T-cell (primary cell): ENCODE measurements at regions of chr17 and their contacts with region 1.

Region 1: GRCh38 chr17:57276621-57277020 is 20.3 kb downstream of the MSI2 start:
- DNase-seq: no peak
- ATAC-seq: no peak
- H3K4me3 ChIP-seq: no peak overlapping the region
- H3K4me3 Mint-ChIP-seq: no peak overlapping the region
- H3K27ac ChIP-seq: no peak overlapping the region
- H3K27ac Mint-ChIP-seq: no peak overlapping the region
- H3K4me1 ChIP-seq: peaks cover 5 to 16% of the 10 kb centered on the region in 2 experiments
- H3K4me1 Mint-ChIP-seq: peaks cover 60 to 71% (median 62%) of the 10 kb centered on the region in 3 donors
- H3K27me3 ChIP-seq: no peaks in the 10 kb centered on the region
- H3K27me3 Mint-ChIP-seq: no peaks in the 10 kb centered on the region

Region 2: DNA sequence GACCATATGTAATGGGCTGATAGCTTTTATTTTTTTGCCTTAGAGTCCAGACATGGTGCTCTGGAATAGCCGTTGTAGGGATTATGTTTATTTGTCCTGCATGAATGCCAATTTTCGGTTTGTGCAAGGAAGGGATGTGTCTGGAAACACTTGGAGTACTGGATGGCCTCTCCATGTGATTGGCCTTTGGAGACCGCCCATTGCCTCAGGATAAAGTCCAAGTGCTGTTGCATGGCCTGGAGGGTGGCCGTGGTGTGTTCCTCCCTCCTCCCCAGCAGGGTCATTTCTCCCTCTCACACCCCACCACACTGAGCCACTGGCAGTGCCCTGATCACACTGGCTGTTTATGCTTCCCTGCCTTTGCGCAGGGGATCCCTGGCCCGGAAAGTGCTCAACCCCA is 73.7 kb after region 1 on chr17:
- CTCF ChIA-PET with region 1: no interaction called
- POLR2A ChIA-PET with region 1: no interaction called
- DNase-seq: no peak
- ATAC-seq: no peak
- H3K4me3 ChIP-seq: no peak overlapping the region
- H3K4me3 Mint-ChIP-seq: no peak overlapping the region
- H3K27ac ChIP-seq: no peak overlapping the region
- H3K27ac Mint-ChIP-seq: no peak overlapping the region
- H3K4me1 ChIP-seq: peaks cover 0 to 11% of the 10 kb centered on the region in 2 experiments
- H3K4me1 Mint-ChIP-seq: peaks cover 49 to 74% (median 49%) of the 10 kb centered on the region in 3 donors
- H3K27me3 ChIP-seq: no peaks in the 10 kb centered on the region
- H3K27me3 Mint-ChIP-seq: no peaks in the 10 kb centered on the region

Region 3: DNA sequence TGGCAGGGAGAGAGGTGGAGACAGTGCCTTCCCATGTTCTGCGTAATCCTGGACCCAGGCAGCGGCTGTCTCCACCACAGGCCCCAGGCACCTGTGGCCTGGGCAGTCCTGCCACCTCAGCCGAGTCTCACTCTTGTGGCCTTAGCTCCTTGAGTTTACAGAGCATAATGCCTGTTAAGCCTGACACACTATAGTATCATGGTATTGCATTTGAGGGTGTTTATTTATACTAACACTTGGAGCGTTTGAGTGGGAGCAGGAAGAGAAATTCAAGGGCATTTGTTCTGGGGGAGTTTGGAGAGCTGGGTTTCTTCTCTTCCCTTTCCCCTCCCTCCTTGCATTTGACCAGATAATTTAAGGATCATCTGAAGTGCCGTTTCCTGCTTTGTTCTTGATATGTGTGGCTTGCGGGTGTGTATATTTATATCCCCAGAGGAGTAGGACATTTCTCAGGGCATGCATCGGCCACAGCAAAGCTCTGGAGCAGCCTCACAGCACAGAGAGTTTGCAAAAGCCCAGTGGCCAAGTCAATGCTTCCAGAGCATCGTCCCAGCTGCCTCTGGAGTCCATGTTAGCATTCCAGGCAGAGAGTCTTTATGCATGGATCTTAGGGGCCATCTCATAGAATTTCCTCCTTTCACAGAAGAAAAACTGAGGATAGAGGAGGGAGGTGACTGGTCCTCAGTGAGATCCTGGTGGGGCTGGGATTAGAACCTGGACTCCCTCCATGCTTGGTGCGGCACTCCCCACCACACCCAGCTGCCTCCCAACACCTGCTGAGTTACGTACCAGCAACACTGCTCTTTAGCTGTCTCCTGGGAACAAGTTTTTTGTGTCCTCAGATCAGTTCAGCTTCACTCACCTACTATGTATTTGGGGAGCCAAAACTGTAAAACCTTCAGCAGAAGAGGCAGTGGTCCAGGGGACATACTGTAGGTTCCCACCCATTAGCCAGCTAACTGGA is 245.7 kb after region 1 on chr17:
- CTCF ChIA-PET with region 1: no interaction called
- POLR2A ChIA-PET with region 1: interaction called in 1 of 2 experiments, 10 read pairs
- DNase-seq: no peak
- ATAC-seq: no peak
- H3K4me3 ChIP-seq: no peak overlapping the region
- H3K4me3 Mint-ChIP-seq: no peak overlapping the region
- H3K27ac ChIP-seq: no peak overlapping the region
- H3K27ac Mint-ChIP-seq: no peak overlapping the region
- H3K4me1 ChIP-seq: no peaks in the 10 kb centered on the region
- H3K4me1 Mint-ChIP-seq: peaks cover 6 to 32% (median 28%) of the 10 kb centered on the region in 3 donors
- H3K27me3 ChIP-seq: no peaks in the 10 kb centered on the region
- H3K27me3 Mint-ChIP-seq: no peaks in the 10 kb centered on the region

Region 4: DNA sequence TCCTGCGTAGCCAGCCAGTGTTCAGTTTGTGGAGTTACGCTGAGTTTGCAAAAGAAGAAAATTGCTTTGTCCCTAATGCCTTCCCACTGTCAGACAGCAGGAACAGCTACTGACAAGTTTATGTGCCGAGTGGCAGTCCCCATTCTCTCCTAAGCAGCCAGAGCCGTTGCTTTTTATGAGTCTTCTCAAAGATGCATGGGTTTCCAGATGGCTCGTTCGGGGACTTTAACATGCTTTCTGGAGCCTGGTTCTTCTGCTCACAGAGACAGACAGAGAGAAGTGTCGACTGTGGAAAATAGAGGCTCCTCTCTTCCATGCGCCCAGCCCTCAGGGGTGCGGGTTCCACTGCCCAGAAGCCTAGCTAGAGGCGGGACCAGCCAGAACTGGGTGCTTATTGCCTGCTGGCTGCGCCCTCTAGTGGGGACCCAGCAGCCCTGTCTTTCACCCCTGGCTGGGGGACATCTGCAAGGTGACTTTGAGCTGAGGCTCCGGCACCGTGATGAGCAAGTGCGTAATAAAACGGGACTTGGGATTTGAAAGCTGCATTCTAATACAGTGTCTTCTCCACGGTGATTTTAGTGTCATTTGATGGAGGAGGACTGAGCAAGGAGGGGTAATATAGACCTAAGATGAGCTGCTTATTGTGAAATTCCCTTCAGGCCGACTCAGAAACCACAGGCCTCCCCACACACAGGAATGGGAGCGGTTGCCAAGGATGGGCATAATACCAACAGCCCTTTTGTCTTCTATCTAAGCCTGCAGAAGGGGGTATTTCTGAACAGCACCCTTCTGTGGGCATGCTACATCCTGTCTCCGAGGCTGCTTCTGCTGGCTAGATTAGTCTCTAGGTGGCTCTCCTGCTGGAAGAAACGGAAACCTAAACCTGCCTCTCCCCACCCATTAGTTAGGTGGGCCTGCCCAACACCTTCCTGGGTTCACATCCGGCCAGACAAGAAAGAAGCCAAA is 395.3 kb after region 1 on chr17:
- CTCF ChIA-PET with region 1: no interaction called
- POLR2A ChIA-PET with region 1: no interaction called
- DNase-seq: peak; percentile 33 to 80 (median 60)
- ATAC-seq: peak; percentile 79 to 87 (median 81)
- H3K4me3 ChIP-seq: no peak overlapping the region
- H3K4me3 Mint-ChIP-seq: peak overlapping the region in 2 of 3 donors; percentile 37 to 39
- H3K27ac ChIP-seq: peak overlapping the region; percentile 47
- H3K27ac Mint-ChIP-seq: peak overlapping the region; percentile 83 to 84
- H3K4me1 ChIP-seq: peaks cover 3 to 29% of the 10 kb centered on the region in 2 experiments
- H3K4me1 Mint-ChIP-seq: peaks cover 20 to 37% (median 36%) of the 10 kb centered on the region in 3 donors
- H3K27me3 ChIP-seq: no peaks in the 10 kb centered on the region
- H3K27me3 Mint-ChIP-seq: no peaks in the 10 kb centered on the region

Region 5: DNA sequence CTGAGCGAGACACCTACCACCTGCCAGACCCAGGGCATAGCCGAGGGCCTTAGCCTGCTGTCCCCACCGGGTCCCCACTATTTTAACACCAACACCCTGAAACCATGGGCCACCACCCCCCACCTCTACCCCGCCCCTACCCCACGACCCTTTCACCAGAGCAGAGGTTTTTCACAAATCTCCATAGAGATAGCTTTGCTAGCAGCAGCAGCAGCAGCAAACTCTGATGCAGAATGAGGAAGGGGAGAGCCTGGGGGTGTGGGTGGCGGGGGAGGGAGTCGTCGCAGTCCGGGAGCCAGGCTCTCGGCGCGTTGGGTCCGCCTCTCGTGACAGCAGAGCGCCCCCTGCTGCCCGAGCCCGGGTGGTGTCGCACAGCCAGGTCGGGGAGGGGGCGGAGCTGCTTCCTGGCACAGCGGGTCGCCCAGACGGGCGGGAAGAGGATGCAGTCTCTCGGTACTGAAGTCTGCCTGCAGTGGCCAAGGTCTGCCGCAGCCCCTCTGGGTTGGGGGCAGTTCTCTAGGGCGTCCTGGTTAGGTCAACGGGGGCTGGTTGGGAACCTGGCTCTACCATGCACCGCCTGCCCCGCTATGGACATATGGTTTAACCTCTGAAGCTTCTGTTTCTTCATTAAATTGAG is 506.6 kb after region 1 on chr17:
- CTCF ChIA-PET with region 1: no interaction called
- POLR2A ChIA-PET with region 1: no interaction called
- DNase-seq: peak; percentile 38 to 80 (median 69)
- ATAC-seq: peak; percentile 85 to 96 (median 91)
- H3K4me3 ChIP-seq: no peak overlapping the region
- H3K4me3 Mint-ChIP-seq: no peak overlapping the region
- H3K27ac ChIP-seq: no peak overlapping the region
- H3K27ac Mint-ChIP-seq: no peak overlapping the region
- H3K4me1 ChIP-seq: peaks cover 0 to 12% of the 10 kb centered on the region in 2 experiments
- H3K4me1 Mint-ChIP-seq: peaks cover 0 to 8% (median 6%) of the 10 kb centered on the region in 3 donors
- H3K27me3 ChIP-seq: peaks cover 2 to 41% of the 10 kb centered on the region in 2 experiments
- H3K27me3 Mint-ChIP-seq: peaks cover 16 to 22% of the 10 kb centered on the region in 2 donors